Esophagus muscularis mucosa (tissue), 4 donors: ENCODE measurements at regions of chr19 and their contacts with region 1.

Region 1: GRCh38 chr19:7799640-7800355 is 30.2 kb upstream of the EVI5L start:
- DNase-seq: no peak
- H3K4me3 ChIP-seq: peak overlapping the region in 3 of 4 donors; percentile 14 to 42 (median 26)
- H3K27ac ChIP-seq: no peak overlapping the region
- H3K4me1 ChIP-seq: peaks cover 0 to 14% (median 13%) of the 10 kb centered on the region in 4 donors
- H3K27me3 ChIP-seq: peaks cover 0 to 82% (median 4%) of the 10 kb centered on the region in 4 donors
- CTCF ChIP-seq: peak; percentile 47 to 84 (median 70)
- EP300 ChIP-seq: no peak
- POLR2A ChIP-seq: no peak

Region 2: GRCh38 chr19:7349961-7350711 is 449.7 kb before region 1 on chr19:
- intact Hi-C with region 1: loop called (anchors 10 kb)
- DNase-seq: no peak
- H3K4me3 ChIP-seq: peak overlapping the region in 1 of 4 donors; percentile 25
- H3K27ac ChIP-seq: no peak overlapping the region
- H3K4me1 ChIP-seq: peaks cover 0 to 10% (median under 1%) of the 10 kb centered on the region in 4 donors
- H3K27me3 ChIP-seq: peaks cover 0 to 4% (median 0%) of the 10 kb centered on the region in 4 donors
- CTCF ChIP-seq: no peak
- EP300 ChIP-seq: no peak
- POLR2A ChIP-seq: no peak

Region 3: GRCh38 chr19:7565332-7565731 is 234.5 kb before region 1 on chr19:
- intact Hi-C with region 1: loop called (anchors 5 kb)
- DNase-seq: no peak
- H3K4me3 ChIP-seq: no peak overlapping the region
- H3K27ac ChIP-seq: no peak overlapping the region
- H3K4me1 ChIP-seq: peaks cover 0 to 3% (median 0%) of the 10 kb centered on the region in 4 donors
- H3K27me3 ChIP-seq: no peaks in the 10 kb centered on the region
- CTCF ChIP-seq: no peak
- EP300 ChIP-seq: no peak
- POLR2A ChIP-seq: no peak

Region 4: DNA sequence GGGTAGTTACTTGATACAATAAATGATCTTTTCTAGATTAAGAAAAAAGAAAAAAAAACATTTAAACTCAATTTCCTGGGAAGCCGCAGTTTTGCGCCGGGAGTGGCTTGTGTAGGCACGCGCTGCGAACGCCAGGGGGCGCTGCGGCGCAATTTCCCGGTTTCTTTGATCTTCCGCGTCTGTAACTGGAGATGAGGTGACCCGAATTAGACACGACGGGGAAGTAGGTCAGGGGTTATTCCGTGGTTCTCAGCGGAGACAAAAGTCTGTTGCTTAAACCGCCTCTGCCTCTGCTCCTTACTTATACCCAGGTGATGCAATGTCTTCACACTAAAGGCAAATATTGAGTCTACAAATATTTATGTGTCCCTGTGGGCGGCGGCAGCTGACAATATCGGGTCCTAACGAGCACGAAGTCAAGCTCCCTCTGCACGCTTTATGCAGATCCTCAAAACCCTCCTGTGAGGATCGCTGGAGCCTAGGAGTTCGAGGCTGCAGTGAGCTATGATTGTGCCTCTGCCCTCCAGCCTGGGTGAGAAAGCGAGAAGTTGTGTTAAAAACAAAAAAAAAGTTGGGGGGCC is 147.6 kb before region 1 on chr19:
- intact Hi-C with region 1: loop called (anchors 2 kb)
- DNase-seq: peak; percentile 97
- H3K4me3 ChIP-seq: peak overlapping the region; percentile 25 to 39 (median 28)
- H3K27ac ChIP-seq: no peak overlapping the region
- H3K4me1 ChIP-seq: peaks cover 0 to 8% (median 6%) of the 10 kb centered on the region in 4 donors
- H3K27me3 ChIP-seq: peaks cover 0 to 44% (median 0%) of the 10 kb centered on the region in 4 donors
- CTCF ChIP-seq: peak in 2 of 3 experiments; percentile 95 to 98
- EP300 ChIP-seq: no peak
- POLR2A ChIP-seq: no peak

Region 5: DNA sequence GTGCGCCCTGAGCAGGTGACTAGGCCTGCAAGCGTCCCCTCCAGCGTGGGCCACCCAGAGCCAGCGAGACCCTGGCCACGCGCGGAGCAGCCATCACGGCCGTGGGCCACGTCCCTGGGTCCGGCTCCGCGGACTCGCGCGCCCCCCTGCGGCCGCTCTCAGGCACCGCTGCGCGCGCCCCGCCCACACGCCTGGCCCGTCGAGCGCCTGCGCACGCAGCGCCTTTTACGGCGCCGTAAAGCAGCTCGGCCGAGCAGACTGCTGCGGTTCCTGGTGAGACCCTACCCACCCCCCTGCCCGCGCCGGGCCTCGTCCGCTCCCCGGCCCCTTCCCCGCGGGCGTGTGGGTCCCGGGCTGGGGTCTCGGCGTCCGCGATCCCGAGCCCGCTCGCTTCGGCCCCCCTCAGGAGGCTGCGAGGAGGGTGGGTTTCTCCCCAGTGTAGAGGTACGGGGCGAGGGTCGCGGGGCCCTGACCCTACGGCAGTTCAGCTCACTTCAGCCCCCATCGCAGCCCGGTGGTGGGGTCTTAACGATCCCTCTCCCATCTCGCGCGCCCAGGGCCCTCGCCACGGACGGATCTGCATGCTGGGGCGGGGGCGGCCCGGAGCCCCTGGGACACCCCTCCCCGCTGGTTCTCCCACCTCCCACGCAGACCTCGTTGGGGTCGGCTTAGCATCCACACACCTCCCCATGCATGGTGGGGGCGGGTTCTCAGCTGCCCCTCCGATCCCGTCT is 119.0 kb before region 1 on chr19 and contains the start of gene TRAPPC5:
- intact Hi-C with region 1: loop called (anchors 10 kb)
- DNase-seq: no peak
- H3K4me3 ChIP-seq: peak within 1 kb of the TSS; percentile 75 to 100 (median 88)
- H3K27ac ChIP-seq: peak within 1 kb of the TSS; percentile 78 to 90 (median 84)
- H3K4me1 ChIP-seq: peaks cover 10 to 29% (median 22%) of the 10 kb centered on the region in 4 donors
- H3K27me3 ChIP-seq: peaks cover 0 to 46% (median 3%) of the 10 kb centered on the region in 4 donors
- CTCF ChIP-seq: peak; percentile 99 to 100 (median 99)
- EP300 ChIP-seq: no peak
- POLR2A ChIP-seq: no peak
- total RNA-seq, gene TRAPPC5: 12.5 to 84.7 (median 64.8) TPM

Region 6: DNA sequence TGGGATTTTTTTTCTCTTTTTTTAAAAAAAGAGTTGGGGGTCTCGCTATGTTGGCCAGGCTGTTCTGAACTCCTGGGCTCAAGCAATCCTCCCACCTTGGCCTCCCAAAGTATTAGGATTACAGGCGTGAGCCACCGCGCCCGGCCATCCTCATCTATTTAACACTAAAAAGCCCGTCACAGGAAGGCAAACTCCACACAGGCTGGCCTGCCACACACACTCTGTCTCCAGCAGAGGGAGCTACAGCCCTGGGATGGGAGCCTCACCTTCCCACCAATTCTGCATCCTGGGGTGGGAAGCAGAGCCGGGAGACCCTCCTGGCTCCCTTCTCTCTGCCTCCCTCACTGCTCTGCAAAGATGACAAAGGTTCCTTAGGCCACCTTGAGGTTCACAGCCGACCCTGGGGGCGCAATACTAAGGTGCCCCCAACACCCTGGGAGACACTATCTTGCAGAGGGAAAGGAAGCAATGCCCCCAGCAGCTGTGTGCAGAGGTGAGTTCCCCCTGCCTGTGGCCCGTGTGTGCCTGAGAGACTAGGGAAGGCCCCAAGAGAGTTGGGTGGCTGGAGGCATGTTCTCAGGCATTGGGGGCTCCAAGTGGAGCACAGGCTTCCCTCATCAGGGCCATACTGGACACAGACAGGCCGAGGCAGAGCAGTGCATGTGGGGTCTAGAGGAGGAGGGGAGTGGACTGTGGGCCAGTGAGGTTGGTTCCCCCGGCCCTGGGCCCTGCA is 171.1 kb after region 1 on chr19:
- intact Hi-C with region 1: no loop called
- DNase-seq: no peak
- H3K4me3 ChIP-seq: no peak overlapping the region
- H3K27ac ChIP-seq: no peak overlapping the region
- H3K4me1 ChIP-seq: peaks cover 0 to 11% (median 5%) of the 10 kb centered on the region in 4 donors
- H3K27me3 ChIP-seq: no peaks in the 10 kb centered on the region
- CTCF ChIP-seq: peak; percentile 42 to 70 (median 43)
- EP300 ChIP-seq: no peak
- POLR2A ChIP-seq: no peak